ENCODE measurements at regions of chr17 and their contacts with region 1.

Region 1: DNA sequence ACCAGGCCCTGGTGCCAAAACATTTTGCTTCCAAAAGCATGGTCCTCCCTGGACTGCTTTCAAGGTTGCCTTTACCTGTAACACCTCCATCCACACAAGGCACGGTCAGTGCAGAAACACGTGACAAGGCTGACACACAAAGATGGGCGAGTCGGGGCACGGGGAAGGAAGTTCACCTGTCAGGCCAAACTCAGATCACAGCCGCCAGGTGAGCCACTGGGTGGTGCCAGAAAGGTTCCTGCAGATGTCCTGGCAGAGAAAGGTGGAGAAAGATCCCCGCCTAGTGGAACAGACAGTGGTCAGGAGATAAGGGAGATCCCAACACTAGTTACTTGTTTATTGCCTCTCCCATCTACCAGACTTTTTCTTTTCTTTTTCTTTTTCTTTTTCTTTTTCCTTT is 155.3 kb downstream of the AIPL1 start:
- DNase-seq: no peak
- H3K4me3 ChIP-seq: no peak overlapping the region
- H3K27ac ChIP-seq: no peak overlapping the region
- H3K4me1 ChIP-seq: no peaks in the 10 kb centered on the region
- H3K27me3 ChIP-seq: no peaks in the 10 kb centered on the region
- CTCF ChIP-seq: no peak
- EP300 ChIP-seq: no peak
- POLR2A ChIP-seq: no peak

Region 2: GRCh38 chr17:5638586-5638985 is 641.1 kb before region 1 on chr17:
- intact Hi-C with region 1: loop called in 1 of 4 experiments (anchors 5 kb)
- DNase-seq: no peak
- H3K4me3 ChIP-seq: no peak overlapping the region
- H3K27ac ChIP-seq: no peak overlapping the region
- H3K4me1 ChIP-seq: no peaks in the 10 kb centered on the region
- H3K27me3 ChIP-seq: no peaks in the 10 kb centered on the region
- CTCF ChIP-seq: no peak
- EP300 ChIP-seq: no peak
- POLR2A ChIP-seq: no peak

Region 3: GRCh38 chr17:6334395-6334794 is 54.7 kb after region 1 on chr17:
- intact Hi-C with region 1: no loop called
- DNase-seq: no peak
- H3K4me3 ChIP-seq: no peak overlapping the region
- H3K27ac ChIP-seq: no peak overlapping the region
- H3K4me1 ChIP-seq: no peaks in the 10 kb centered on the region
- H3K27me3 ChIP-seq: no peaks in the 10 kb centered on the region
- CTCF ChIP-seq: no peak
- EP300 ChIP-seq: no peak
- POLR2A ChIP-seq: no peak